ENCODE measurements at regions of chr6 and their contacts with region 1.

Region 1: DNA sequence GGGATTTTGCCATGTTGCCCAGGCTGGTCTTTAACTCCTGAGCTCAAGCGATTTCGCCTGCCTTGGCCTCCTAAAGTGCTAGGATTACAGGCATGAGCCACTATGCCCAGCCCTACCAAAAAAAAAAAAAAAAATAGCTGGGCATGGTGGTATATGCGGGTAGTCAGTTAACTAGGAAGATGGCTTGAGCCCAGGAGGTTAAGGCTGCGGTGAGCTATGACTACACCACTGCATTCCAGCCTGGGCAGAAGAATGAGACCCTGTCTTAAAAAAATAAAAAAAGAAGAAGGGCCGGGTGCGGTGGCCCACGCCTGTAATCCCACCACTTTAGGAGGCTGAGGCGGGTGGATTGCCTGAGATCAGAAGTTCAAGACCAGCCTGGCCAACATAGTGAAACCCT is 50.2 kb downstream of the ELOVL2 start:
- DNase-seq: no peak
- ATAC-seq: no peak
- H3K4me3 ChIP-seq: no peak overlapping the region
- H3K27ac ChIP-seq: no peak overlapping the region
- H3K4me1 ChIP-seq: no peaks in the 10 kb centered on the region
- H3K27me3 ChIP-seq: no peaks in the 10 kb centered on the region
- CTCF ChIP-seq: no peak
- POLR2A ChIP-seq: no peak
- RAD21 ChIP-seq: no peak

Region 2: DNA sequence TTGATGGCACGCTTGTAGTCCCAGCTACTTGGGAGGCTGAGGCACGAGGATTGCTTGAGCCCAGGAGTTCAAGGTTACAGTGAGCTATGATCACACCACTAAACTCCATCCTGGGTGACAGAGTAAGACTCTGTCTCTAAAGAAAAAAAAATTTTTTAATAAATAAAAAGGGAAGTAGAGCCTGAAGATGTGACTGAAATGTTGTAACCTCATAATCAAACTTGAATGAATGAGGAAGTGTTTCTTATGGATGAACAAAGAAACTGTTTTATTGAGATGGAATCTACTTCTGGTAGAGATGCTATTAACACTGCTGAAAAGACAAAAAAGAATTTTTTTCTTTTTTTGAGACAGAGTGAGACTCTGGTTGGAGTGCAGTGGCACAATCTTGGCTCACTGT is 162.3 kb before region 1 on chr6:
- CTCF ChIA-PET with region 1: no interaction called
- POLR2A ChIA-PET with region 1: no interaction called
- dilution Hi-C with region 1: no loop called
- in situ Hi-C with region 1: no loop called
- intact Hi-C with region 1: no loop called
- DNase-seq: no peak
- ATAC-seq: no peak
- H3K4me3 ChIP-seq: no peak overlapping the region
- H3K27ac ChIP-seq: no peak overlapping the region
- H3K4me1 ChIP-seq: no peaks in the 10 kb centered on the region
- H3K27me3 ChIP-seq: peaks cover 9% of the 10 kb centered on the region
- CTCF ChIP-seq: no peak
- POLR2A ChIP-seq: no peak
- RAD21 ChIP-seq: no peak

Region 3: DNA sequence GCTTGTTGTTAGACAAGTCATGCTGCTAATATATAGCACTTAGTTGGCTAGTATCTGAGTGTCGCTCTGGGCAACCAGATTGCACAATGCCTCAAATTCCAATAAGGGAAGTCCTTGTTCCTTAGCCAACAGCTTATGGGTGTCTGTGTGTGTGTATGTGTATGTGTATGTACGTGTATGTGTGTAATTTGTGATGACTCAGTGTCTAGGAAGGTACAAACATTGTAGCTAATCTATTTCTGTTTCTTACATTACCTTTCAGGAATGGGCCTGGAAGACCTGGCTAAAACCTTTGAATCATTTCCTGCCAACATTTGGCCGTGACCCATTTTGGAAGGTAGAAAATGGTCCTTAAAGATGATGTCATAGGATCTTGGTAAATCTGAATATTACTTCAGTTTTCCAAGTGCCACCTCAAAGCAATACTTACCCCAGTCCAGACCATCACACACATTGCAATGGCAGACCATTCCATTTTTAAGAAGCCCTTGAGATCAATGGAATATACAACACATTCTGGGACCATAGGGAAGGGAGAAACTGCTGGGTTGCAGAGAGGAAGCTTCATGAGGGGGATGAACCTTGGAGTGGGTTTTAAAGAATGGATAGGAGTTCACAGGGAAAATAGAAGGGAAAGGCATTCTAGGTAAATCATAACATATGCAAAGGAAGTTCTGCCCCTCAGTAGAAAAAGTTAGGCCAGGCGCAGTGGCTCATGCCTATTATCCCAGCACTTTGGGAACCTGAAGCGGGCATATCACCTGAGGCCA is 213.5 kb after region 1 on chr6:
- CTCF ChIA-PET with region 1: no interaction called
- POLR2A ChIA-PET with region 1: no interaction called
- dilution Hi-C with region 1: no loop called
- in situ Hi-C with region 1: no loop called
- intact Hi-C with region 1: no loop called
- DNase-seq: peak; percentile 100
- ATAC-seq: peak; percentile 67
- H3K4me3 ChIP-seq: no peak overlapping the region
- H3K27ac ChIP-seq: peak overlapping the region; percentile 35
- H3K4me1 ChIP-seq: peaks cover 20% of the 10 kb centered on the region
- H3K27me3 ChIP-seq: no peaks in the 10 kb centered on the region
- CTCF ChIP-seq: no peak
- POLR2A ChIP-seq: no peak
- RAD21 ChIP-seq: peak; percentile 10; the same call in 1 of the 2 replicates

Region 4: GRCh38 chr6:11537229-11538051 is 543.5 kb after region 1 on chr6 and contains the start of gene TMEM170B:
- CTCF ChIA-PET with region 1: no interaction called
- POLR2A ChIA-PET with region 1: interaction called, 13 read pairs
- dilution Hi-C with region 1: no loop called
- in situ Hi-C with region 1: no loop called
- intact Hi-C with region 1: no loop called
- DNase-seq: peak; percentile 81
- ATAC-seq: peak; percentile 99
- H3K4me3 ChIP-seq: peak within 1 kb of the TSS; percentile 76
- H3K27ac ChIP-seq: no peak within 1 kb of the TSS
- H3K4me1 ChIP-seq: no peaks in the 10 kb centered on the region
- H3K27me3 ChIP-seq: peaks cover 20% of the 10 kb centered on the region
- CTCF ChIP-seq: no peak
- POLR2A ChIP-seq: no peak
- RAD21 ChIP-seq: no peak
- total RNA-seq, gene TMEM170B: 0.18 and 0.28 TPM in 2 replicates